ENCODE measurements at regions of chr18 and their contacts with region 1.

Region 1: GRCh38 chr18:55415258-55415871 is 172.6 kb downstream of the TCF4 start:
- DNase-seq: peak; percentile 88 to 92
- ATAC-seq: peak; percentile 86 to 92 (median 90)
- H3K4me3 ChIP-seq: peak overlapping the region; percentile 20
- H3K27ac ChIP-seq: peak overlapping the region; percentile 32
- H3K4me1 ChIP-seq: peaks cover 63% of the 10 kb centered on the region
- H3K27me3 ChIP-seq: no peaks in the 10 kb centered on the region
- CTCF ChIP-seq: peak; percentile 94

Region 2: DNA sequence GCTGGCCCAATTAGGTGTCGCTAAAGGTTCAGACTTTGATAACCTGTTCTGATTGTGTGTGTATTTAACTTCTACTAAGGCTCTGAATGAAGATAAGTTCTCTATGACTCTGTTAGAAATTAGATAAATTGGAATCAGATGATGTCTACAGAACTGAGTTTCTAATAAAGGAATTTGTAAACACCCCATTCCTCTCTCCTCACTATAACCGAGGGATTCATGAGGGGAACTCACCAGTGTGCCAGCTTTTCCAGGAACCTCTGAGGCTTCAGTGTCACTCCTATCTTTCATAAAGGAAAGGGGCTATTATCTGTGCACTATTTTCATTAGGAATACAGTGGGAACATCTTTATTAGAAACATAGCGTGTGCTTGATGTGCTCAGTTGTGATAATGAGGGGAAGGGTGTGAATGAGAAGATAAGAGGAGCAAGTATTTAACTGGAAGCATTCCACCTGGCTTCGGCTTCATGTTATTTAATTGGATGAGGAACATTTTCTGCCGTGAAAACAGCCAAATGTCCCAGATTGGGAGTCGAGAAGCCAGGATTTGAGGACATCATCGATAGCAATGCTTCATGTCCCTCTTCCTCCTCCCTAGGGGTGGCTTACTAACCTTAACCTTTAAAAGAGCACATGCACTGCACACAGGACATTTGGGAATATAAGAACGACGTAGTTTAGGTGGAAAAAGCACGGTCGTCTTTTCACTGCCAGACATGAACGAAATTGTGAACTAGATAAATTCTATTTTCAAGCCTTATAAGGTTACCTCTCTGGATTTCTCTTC is 257.4 kb after region 1 on chr18:
- intact Hi-C with region 1: no loop called
- DNase-seq: no peak
- ATAC-seq: no peak
- H3K4me3 ChIP-seq: peak overlapping the region; percentile 12
- H3K27ac ChIP-seq: no peak overlapping the region
- H3K4me1 ChIP-seq: no peaks in the 10 kb centered on the region
- H3K27me3 ChIP-seq: no peaks in the 10 kb centered on the region
- CTCF ChIP-seq: no peak

Region 3: DNA sequence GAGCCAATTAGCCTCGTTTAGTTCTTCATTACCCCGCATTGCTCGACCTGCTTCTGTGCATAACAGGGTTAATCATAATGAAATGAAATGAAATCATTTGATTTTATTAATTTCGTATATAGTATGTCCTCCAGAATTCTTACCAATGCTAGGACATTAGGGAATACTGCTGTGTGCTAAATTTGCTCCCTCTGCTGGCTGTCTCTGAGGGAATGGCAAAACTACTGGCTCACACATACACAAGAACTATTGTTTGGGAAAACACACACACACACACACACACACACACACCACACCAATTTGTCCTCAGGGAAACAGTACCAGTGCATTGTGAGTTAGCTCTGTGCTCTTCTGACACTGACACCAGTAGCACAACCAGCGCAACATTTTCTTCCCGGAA is 445.9 kb after region 1 on chr18:
- intact Hi-C with region 1: loop called in 1 of 2 experiments (anchors 10 kb)
- DNase-seq: no peak
- ATAC-seq: no peak
- H3K4me3 ChIP-seq: no peak overlapping the region
- H3K27ac ChIP-seq: no peak overlapping the region
- H3K4me1 ChIP-seq: peaks cover 8% of the 10 kb centered on the region
- H3K27me3 ChIP-seq: peaks cover 0 to 66% (median 7%) of the 10 kb centered on the region in 3 donors
- CTCF ChIP-seq: peak; percentile 23

Measured in psoas muscle (tissue), 8 donors.